AG04449 (cell line): ENCODE measurements at regions of chr7 and their contacts with region 1.

Region 1: DNA sequence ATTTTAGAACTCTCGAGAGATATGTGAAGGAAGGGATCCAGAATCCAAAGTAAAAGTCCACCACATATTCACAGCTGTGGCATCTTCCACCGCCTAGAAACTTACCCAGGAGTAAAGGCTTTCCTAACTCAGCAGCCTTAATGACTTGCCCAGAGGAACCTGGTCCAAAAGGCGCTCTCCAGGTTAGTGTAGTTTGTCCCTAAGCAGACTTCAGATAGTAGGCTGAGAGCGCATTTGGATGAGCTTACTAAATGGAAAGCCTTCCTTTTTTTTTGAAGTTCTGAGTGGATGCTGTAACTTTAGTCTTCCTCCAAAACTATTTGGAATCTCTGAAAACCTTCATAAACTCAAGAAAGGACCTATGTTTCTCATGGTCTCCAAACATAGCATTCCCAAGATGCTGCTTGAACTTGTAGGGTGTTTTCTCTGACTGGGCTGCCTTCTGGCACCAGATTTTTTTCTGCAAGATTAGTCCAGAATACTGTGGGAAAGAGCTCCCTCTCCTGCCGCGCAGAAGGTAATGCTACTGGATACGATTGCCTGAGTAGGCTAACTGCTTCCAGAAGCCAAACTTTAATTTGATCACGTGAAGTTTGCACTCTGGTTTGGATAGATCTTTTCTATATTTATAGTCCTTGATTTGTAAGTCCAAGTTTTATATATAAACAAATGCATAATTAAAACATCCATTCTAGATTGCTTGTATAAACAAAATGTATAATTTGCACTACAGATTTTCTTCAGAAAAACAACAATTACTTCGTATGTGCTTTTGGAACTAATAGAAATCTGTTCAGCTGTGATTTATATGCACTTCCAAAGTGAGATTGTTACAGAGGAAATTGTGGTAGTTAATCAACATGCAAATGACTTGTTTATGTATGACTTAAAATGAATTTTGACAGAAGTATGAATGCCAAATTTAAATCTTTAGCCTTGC is 19.6 kb upstream of the GPR37 start:
- DNase-seq: peak; percentile 12
- H3K4me3 ChIP-seq: no peak overlapping the region
- CTCF ChIP-seq: peak; percentile 80

Region 2: GRCh38 chr7:124171068-124171467 is 614.1 kb before region 1 on chr7:
- CTCF ChIA-PET with region 1: interaction called, 31 read pairs
- POLR2A ChIA-PET with region 1: no interaction called
- DNase-seq: peak; percentile 4
- H3K4me3 ChIP-seq: no peak overlapping the region
- CTCF ChIP-seq: peak; percentile 32

Region 3: DNA sequence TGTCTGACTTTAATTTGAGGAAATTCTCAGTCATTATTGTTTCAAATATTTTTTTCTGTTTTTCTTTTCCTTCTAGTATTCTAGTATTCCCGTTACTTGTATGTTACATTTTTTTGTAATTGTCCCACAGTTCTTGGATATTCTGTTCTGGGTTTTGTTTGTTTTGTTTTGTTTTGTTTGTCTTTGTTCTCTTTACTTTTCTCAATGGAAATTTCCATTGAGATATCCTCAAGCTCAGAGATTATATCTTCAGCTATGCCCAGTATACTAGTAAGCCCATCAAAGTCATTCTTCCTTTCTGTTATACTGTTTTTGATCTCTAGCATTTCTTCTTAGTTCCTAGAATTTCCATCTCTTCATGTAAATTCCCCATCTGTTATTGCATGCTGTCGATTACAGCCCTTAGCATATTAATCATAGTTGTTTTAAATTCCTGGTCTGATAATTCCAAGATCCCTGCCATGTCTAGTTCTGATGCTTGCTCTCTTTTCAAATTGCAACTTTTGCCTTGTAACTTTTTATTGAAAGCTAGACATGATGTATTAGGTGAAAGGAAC is 47.3 kb before region 1 on chr7:
- CTCF ChIA-PET with region 1: no interaction called
- POLR2A ChIA-PET with region 1: no interaction called
- DNase-seq: no peak
- H3K4me3 ChIP-seq: no peak overlapping the region
- CTCF ChIP-seq: no peak